ENCODE measurements at regions of chr20 and their contacts with region 1.

Region 1: GRCh38 chr20:58650776-58651558 is at the start of gene STX16:
- DNase-seq: peak; percentile 79 to 93
- H3K4me3 ChIP-seq: peak within 1 kb of the TSS; percentile 63 to 90 (median 82)
- H3K27ac ChIP-seq: peak within 1 kb of the TSS; percentile 84
- H3K4me1 ChIP-seq: peaks cover 5 to 10% (median 9%) of the 10 kb centered on the region in 4 experiments; a peak in 6 of 7 replicates
- H3K27me3 ChIP-seq: peaks cover 0 to 3% (median 0%) of the 10 kb centered on the region in 4 experiments; a peak in 2 of 7 replicates
- CTCF ChIP-seq: peak; percentile 51 to 60 (median 53)
- EP300 ChIP-seq: peak; percentile 51 to 90
- POLR2A ChIP-seq: peak; percentile 33 to 67; a peak in 2 of 3 replicates
- RAD21 ChIP-seq: peak; percentile 55 to 56
- total RNA-seq, gene STX16: 61.6 and 64.4 TPM in 2 replicates

Region 2: DNA sequence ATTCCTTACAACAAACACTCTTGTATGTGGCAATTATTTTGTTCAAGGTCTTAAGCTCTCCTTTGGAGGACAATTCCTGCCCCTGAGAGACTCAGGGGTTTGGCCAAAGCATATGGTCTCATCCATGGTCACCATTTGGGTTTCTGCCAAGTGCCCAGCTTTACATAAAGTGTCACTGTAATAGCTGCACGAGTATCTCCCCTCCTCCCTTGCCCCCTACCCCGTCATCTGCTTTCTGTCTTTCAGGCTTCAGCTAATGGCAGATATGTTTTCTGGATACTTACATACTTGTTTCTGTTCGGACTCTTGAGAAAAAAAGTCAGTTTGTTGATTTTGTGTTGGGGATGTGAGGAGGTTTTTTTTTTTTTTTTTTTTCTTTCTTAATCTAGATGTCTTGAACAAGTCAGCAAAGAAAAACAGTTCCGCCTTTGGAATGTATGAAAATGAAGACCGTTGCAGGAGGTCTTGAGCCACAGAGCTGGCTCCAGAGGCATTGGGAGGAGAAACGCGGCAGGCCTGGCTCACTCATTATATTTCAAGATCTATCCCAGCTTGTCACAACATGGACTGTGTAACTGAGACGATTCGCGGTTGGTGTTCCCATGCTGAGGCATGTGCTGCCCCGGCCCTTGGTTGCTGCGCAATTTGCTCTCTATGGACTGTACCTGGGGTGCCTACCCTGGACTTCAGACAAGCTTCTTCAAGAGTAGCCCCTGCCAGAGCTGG is 32.5 kb before region 1 on chr20:
- CTCF ChIA-PET with region 1: interaction called, 6 read pairs
- POLR2A ChIA-PET with region 1: interaction called, 26 read pairs
- DNase-seq: no peak
- H3K4me3 ChIP-seq: no peak overlapping the region
- H3K27ac ChIP-seq: no peak overlapping the region
- H3K4me1 ChIP-seq: peaks cover 0 to 9% (median 5%) of the 10 kb centered on the region in 4 experiments; a peak in 5 of 7 replicates
- H3K27me3 ChIP-seq: peaks cover 0 to 13% (median 7%) of the 10 kb centered on the region in 4 experiments; a peak in 4 of 7 replicates
- CTCF ChIP-seq: no peak
- EP300 ChIP-seq: no peak
- POLR2A ChIP-seq: no peak
- RAD21 ChIP-seq: no peak

Region 3: DNA sequence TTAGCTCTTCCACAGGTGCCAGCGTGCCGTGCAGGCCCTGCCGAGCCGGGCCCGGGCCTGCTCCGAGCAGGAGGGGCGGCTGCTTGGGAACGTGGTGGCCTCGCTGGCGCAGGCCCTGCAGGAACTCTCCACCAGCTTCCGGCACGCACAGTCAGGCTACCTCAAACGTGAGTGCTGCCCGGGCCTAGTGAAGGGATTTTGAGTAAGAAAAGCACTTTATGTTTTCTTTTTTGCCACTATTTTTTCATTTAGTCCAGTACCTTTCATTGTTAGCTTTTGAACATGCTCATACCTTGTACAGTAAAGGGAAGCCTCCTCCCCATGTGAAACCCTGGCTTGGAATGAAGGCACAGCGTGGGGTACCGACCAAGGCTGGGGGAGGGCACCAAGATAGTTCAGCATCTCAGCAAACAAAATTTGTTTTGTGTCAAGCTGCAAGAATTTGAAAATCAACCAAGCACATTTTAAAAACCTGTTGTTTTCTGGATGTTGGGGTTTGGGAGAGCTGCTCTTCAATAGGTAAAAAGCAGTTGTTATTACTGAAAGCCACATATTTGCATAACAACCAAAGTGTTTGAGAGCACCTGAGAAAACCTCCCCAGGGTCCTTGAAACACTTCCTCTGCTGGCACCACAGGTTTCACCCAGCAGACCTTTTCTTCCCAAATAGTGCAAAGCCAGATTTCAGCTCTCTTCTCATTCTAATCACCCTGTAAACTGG is 18.5 kb after region 1 on chr20:
- CTCF ChIA-PET with region 1: interaction called, 34 read pairs
- POLR2A ChIA-PET with region 1: interaction called, 242 read pairs
- DNase-seq: peak; percentile 64 to 78
- H3K4me3 ChIP-seq: peak overlapping the region in 2 of 4 experiments; percentile 5 to 39; a peak in 2 of 8 replicates
- H3K27ac ChIP-seq: peak overlapping the region; percentile 94
- H3K4me1 ChIP-seq: peaks cover 16 to 34% (median 29%) of the 10 kb centered on the region in 4 experiments
- H3K27me3 ChIP-seq: no peaks in the 10 kb centered on the region
- CTCF ChIP-seq: no peak
- EP300 ChIP-seq: peak in 1 of 2 experiments; percentile 95; a peak in 1 of 3 replicates
- POLR2A ChIP-seq: peak in 1 of 2 experiments; percentile 72; a peak in 1 of 3 replicates
- RAD21 ChIP-seq: 0 out of 4 replicates have a peak, but pooled peaks of 1 of the 2 experiments have one; percentile 8

Region 4: GRCh38 chr20:58692594-58693226 is 41.7 kb after region 1 on chr20 and contains the start of gene NPEPL1:
- CTCF ChIA-PET with region 1: interaction called, 10 read pairs
- POLR2A ChIA-PET with region 1: interaction called, 54 read pairs
- DNase-seq: peak in 1 of 2 experiments; percentile 70
- H3K4me3 ChIP-seq: peak within 1 kb of the TSS; percentile 21 to 56 (median 36)
- H3K27ac ChIP-seq: peak within 1 kb of the TSS; percentile 13; the same call in 1 of the 2 replicates
- H3K4me1 ChIP-seq: peaks cover 3 to 28% (median 17%) of the 10 kb centered on the region in 4 experiments
- H3K27me3 ChIP-seq: no peaks in the 10 kb centered on the region
- CTCF ChIP-seq: peak; percentile 19 to 47 (median 34); a peak in 3 of 4 replicates
- EP300 ChIP-seq: no peak
- POLR2A ChIP-seq: no peak
- RAD21 ChIP-seq: peak in 1 of 2 experiments; percentile 44; a peak in 1 of 4 replicates
- total RNA-seq, gene NPEPL1: 26.7 and 26.8 TPM in 2 replicates

Region 5: GRCh38 chr20:58716644-58717510 is 65.9 kb after region 1 on chr20:
- CTCF ChIA-PET with region 1: interaction called, 16 read pairs
- POLR2A ChIA-PET with region 1: interaction called, 7 read pairs
- DNase-seq: peak in 1 of 2 experiments; percentile 46
- H3K4me3 ChIP-seq: no peak overlapping the region
- H3K27ac ChIP-seq: no peak overlapping the region
- H3K4me1 ChIP-seq: peaks cover 0 to 4% (median 0%) of the 10 kb centered on the region in 4 experiments; a peak in 2 of 7 replicates
- H3K27me3 ChIP-seq: no peaks in the 10 kb centered on the region
- CTCF ChIP-seq: no peak
- EP300 ChIP-seq: no peak
- POLR2A ChIP-seq: no peak
- RAD21 ChIP-seq: no peak

Region 6: GRCh38 chr20:58839474-58839874 is 188.5 kb after region 1 on chr20:
- CTCF ChIA-PET with region 1: interaction called, 15 read pairs
- POLR2A ChIA-PET with region 1: interaction called, 30 read pairs
- DNase-seq: peak in 1 of 2 experiments; percentile 71
- H3K4me3 ChIP-seq: peak overlapping the region; percentile 49 to 62 (median 60)
- H3K27ac ChIP-seq: no peak overlapping the region
- H3K4me1 ChIP-seq: peaks cover 9 to 21% (median 15%) of the 10 kb centered on the region in 4 experiments
- H3K27me3 ChIP-seq: peaks cover 0 to 18% (median 11%) of the 10 kb centered on the region in 4 experiments; a peak in 5 of 7 replicates
- CTCF ChIP-seq: peak; percentile 64 to 71 (median 67)
- EP300 ChIP-seq: no peak
- POLR2A ChIP-seq: peak in 1 of 2 experiments; percentile 27; a peak in 1 of 3 replicates
- RAD21 ChIP-seq: peak; percentile 71 to 85

Measured in H1 (cell line).